ENCODE measurements at regions of chr10 and their contacts with region 1.

Region 1: DNA sequence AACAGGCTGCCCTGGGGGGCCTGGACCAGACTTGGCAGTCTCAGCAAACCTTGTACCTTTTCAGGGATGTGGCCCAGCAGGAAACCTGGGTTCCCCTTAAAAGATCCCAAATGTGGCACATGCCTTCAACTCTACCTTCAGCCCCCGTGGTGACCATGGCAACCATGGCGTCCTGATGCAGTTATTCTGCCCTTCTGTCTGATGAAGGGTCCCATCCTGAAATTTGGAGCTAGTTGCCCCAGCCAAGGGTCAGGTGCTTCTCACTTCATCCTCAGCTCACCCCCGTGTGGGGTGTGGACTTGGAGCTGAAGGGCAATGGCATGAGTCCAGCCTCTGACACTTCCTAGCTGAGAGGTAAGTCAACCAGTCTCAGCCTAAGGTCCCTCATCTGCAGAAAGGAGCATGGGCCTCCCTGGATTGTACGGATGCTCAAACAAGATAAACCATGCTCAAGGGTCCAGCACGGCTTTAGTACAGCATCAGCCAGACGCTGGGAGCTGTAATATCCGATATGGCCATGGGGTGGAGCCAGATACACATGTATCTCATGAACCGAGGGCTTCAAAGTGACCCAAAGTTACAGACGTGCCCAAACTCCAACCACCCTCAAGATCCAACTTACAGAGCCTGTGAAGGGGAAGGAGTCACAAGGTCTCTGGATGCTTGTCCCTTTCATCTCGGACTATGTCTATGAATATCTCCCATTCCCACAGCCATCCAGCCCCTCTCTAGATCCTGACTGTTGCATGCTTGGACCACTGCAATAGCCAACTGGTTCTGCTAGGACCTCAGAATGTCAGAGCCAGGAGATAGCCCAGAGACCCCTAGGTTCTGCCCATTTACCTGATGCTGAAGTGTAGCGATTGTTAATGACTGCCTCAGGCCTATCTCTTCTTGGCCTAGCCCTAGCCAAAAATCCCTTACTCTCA is 142.5 kb downstream of the SH3PXD2A start:
- DNase-seq: peak; percentile 75
- ATAC-seq: peak; percentile 75
- H3K4me3 ChIP-seq: no peak overlapping the region
- H3K27ac ChIP-seq: no peak overlapping the region
- H3K4me1 ChIP-seq: peaks cover 36 to 51% of the 10 kb centered on the region in 2 experiments
- H3K27me3 ChIP-seq: no peaks in the 10 kb centered on the region
- CTCF ChIP-seq: peak in 2 of 3 experiments; percentile 84 to 99; a peak in 4 of 6 replicates
- POLR2A ChIP-seq: no peak
- RAD21 ChIP-seq: no peak

Region 2: DNA sequence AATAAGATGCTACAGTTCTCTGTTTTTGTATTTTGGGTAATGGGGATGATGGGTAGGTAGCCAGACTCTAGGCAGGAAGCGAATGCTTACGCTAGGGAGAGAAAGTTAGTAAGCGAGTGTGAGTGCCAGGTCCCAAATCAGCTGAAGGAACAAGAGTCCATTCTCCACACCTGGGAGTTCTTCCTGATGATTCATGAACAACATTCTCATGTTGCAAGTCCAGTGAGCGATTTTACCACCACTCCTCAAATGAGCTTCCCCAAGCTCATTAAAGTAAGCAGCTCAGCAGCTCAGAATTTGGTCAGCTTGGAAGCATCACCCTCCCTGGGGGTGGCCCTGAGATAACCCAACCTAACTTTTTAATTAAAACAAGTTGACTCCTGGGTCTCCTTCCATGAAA is 115.3 kb after region 1 on chr10:
- CTCF ChIA-PET with region 1: no interaction called
- POLR2A ChIA-PET with region 1: no interaction called
- RAD21 ChIA-PET with region 1: no interaction called
- intact Hi-C with region 1: no loop called
- DNase-seq: peak; percentile 23
- ATAC-seq: peak; percentile 39
- H3K4me3 ChIP-seq: no peak overlapping the region
- H3K27ac ChIP-seq: no peak overlapping the region
- H3K4me1 ChIP-seq: peaks cover 3 to 16% of the 10 kb centered on the region in 2 experiments; a peak in 3 of 4 replicates
- H3K27me3 ChIP-seq: no peaks in the 10 kb centered on the region
- CTCF ChIP-seq: no peak
- POLR2A ChIP-seq: no peak
- RAD21 ChIP-seq: no peak

Region 3: GRCh38 chr10:103859161-103860086 is 146.6 kb after region 1 on chr10:
- CTCF ChIA-PET with region 1: interaction called, 11 read pairs
- POLR2A ChIA-PET with region 1: no interaction called
- RAD21 ChIA-PET with region 1: interaction called, 3 to 4 read pairs
- intact Hi-C with region 1: loop called (anchors 1 kb)
- DNase-seq: peak; percentile 50
- ATAC-seq: peak; percentile 96
- H3K4me3 ChIP-seq: no peak overlapping the region
- H3K27ac ChIP-seq: no peak overlapping the region
- H3K4me1 ChIP-seq: peaks cover 0 to 5% of the 10 kb centered on the region in 2 experiments; a peak in 1 of 4 replicates
- H3K27me3 ChIP-seq: no peaks in the 10 kb centered on the region
- CTCF ChIP-seq: peak; percentile 67 to 93 (median 92)
- POLR2A ChIP-seq: no peak
- RAD21 ChIP-seq: peak; percentile 96

Region 4: GRCh38 chr10:104028146-104028545 is 315.3 kb after region 1 on chr10:
- CTCF ChIA-PET with region 1: interaction called, 4 read pairs
- POLR2A ChIA-PET with region 1: no interaction called
- RAD21 ChIA-PET with region 1: no interaction called
- intact Hi-C with region 1: loop called (anchors 10 kb)
- DNase-seq: peak; percentile 29
- ATAC-seq: peak; percentile 99
- H3K4me3 ChIP-seq: no peak overlapping the region
- H3K27ac ChIP-seq: no peak overlapping the region
- H3K4me1 ChIP-seq: no peaks in the 10 kb centered on the region
- H3K27me3 ChIP-seq: no peaks in the 10 kb centered on the region
- CTCF ChIP-seq: peak in 2 of 3 experiments; percentile 67 to 77; a peak in 4 of 6 replicates
- POLR2A ChIP-seq: no peak
- RAD21 ChIP-seq: peak; percentile 29; the same call in 1 of the 2 replicates

Region 5: DNA sequence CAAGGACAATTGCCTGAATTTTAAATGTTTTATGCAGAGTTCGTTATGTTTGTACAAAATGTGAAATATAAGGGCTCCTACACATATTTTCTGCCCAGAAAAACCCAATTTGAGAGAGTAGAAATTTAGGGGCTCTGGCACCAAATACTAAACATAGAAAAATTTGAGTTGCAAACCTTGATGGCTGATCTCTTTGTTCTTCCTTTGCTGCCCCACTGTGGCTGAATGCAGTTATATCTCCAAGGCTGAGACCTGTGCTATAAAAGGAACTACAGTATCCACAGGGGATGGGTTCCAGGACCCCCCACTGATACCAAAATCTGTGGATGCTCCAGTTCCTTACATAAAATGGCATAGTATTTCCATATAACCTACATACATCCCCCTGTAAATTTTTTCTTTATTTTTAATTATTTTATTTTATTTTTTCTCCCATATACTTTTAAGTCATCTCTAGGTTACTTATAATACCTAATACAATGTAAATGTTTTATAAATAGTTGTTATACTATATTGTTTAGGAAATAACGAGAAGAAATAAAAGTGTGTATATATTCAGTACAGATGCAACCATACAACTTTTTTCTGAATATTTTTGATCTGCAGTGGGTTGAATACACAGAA is 496.9 kb after region 1 on chr10:
- CTCF ChIA-PET with region 1: no interaction called
- POLR2A ChIA-PET with region 1: no interaction called
- RAD21 ChIA-PET with region 1: no interaction called
- intact Hi-C with region 1: loop called (anchors 2 kb)
- DNase-seq: peak; percentile 41
- ATAC-seq: peak; percentile 93
- H3K4me3 ChIP-seq: no peak overlapping the region
- H3K27ac ChIP-seq: no peak overlapping the region
- H3K4me1 ChIP-seq: no peaks in the 10 kb centered on the region
- H3K27me3 ChIP-seq: no peaks in the 10 kb centered on the region
- CTCF ChIP-seq: peak; percentile 81 to 92 (median 83)
- POLR2A ChIP-seq: no peak
- RAD21 ChIP-seq: peak; percentile 95

Region 6: GRCh38 chr10:104622598-104623209 is 909.9 kb after region 1 on chr10:
- CTCF ChIA-PET with region 1: no interaction called
- POLR2A ChIA-PET with region 1: no interaction called
- RAD21 ChIA-PET with region 1: no interaction called
- intact Hi-C with region 1: loop called (anchors 5 kb)
- DNase-seq: peak; percentile 55
- ATAC-seq: peak; percentile 99
- H3K4me3 ChIP-seq: no peak overlapping the region
- H3K27ac ChIP-seq: no peak overlapping the region
- H3K4me1 ChIP-seq: no peaks in the 10 kb centered on the region
- H3K27me3 ChIP-seq: peaks cover 50% of the 10 kb centered on the region
- CTCF ChIP-seq: peak; percentile 87 to 97 (median 93)
- POLR2A ChIP-seq: no peak
- RAD21 ChIP-seq: peak; percentile 93

Measured in HCT116 (cell line).